GM23248 (cell line): ENCODE measurements at regions of chr1 and their contacts with region 1.

Region 1: GRCh38 chr1:43946236-43947060 is at the start of gene IPO13:
- DNase-seq: peak; percentile 98
- H3K4me3 ChIP-seq: peak within 1 kb of the TSS; percentile 92
- H3K27ac ChIP-seq: peak within 1 kb of the TSS; percentile 76
- H3K4me1 ChIP-seq: peaks cover 15% of the 10 kb centered on the region
- H3K27me3 ChIP-seq: no peaks in the 10 kb centered on the region
- total RNA-seq, gene IPO13: 29.4 and 35.8 TPM in 2 replicates

Region 2: GRCh38 chr1:43227143-43227764 is 719.2 kb before region 1 on chr1:
- in situ Hi-C with region 1: loop called (anchors 25 kb)
- DNase-seq: peak; percentile 68
- H3K4me3 ChIP-seq: no peak overlapping the region
- H3K27ac ChIP-seq: no peak overlapping the region
- H3K4me1 ChIP-seq: peaks cover 7% of the 10 kb centered on the region
- H3K27me3 ChIP-seq: no peaks in the 10 kb centered on the region

Region 3: DNA sequence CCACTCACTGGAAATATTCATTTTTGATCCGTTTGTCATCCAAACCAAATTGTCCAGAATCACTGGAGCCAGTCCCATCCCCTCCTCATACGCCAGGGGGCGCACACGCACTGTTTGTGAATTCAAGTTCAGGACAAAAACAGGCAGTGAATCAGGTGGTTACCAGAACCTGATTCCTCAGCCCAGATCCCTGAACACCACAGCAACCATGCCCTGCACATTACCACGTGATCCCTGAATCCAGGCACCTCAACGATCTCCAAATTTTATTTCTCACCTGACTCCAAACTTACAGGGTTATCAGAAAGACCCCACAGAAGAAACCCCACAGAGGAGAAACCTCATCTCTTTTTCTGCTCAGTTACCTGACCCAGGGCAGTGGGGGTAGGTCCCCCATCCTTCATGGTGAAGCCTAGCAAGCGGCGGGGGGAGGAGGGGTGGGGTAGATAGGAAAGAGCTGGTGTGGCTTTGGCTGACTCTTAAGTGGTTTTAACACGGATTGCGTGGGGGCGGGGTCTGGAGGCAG is 417.2 kb before region 1 on chr1:
- in situ Hi-C with region 1: loop called (anchors 25 kb)
- DNase-seq: peak; percentile 90
- H3K4me3 ChIP-seq: no peak overlapping the region
- H3K27ac ChIP-seq: no peak overlapping the region
- H3K4me1 ChIP-seq: peaks cover 4% of the 10 kb centered on the region; the same call in 1 of the 2 replicates
- H3K27me3 ChIP-seq: no peaks in the 10 kb centered on the region

Region 4: GRCh38 chr1:43634721-43635120 is 311.7 kb before region 1 on chr1:
- in situ Hi-C with region 1: no loop called
- DNase-seq: no peak
- H3K4me3 ChIP-seq: no peak overlapping the region
- H3K27ac ChIP-seq: no peak overlapping the region
- H3K4me1 ChIP-seq: no peaks in the 10 kb centered on the region
- H3K27me3 ChIP-seq: no peaks in the 10 kb centered on the region

Region 5: DNA sequence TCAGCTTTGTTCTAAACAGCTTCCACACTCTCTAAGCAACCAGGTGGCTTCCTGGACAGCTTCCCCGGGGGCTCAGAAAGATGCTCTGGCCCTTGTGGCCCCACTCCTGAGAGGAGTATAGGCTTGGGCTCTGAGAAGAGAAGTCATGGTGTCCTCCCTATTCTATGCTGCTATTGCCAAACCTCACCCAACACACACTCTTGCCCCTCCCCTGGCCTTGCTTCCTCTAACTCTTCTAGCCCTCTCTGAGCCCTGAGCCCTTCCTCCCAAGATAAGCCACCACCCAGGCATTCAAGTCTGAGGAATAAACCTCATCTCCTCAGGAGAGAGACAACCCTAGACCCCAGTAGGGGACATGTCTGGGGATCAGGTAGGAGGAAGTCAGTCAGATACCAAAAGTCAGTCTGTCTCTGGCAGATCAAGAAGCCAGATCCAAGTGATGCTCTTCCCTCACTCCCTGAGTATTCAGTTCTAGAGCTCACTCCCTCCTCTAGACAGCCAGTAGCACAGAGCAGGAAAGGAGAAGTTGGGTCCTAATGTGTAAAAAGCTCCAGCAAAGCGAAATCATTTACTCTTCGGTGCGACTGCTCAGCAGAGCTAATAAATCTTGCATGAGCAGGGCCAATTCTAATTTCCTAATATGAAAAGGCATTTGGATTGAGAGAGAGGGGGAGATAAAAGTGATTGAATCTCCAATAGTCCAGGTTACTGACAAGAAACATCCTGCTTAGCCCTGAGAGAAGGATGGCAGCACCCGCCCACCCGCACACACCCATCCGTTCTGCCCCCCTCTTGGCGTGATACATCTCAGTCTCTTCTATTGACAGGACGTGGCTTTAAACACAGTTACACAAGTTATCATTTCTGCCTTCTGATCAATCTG is 317.4 kb after region 1 on chr1:
- in situ Hi-C with region 1: no loop called
- DNase-seq: no peak
- H3K4me3 ChIP-seq: no peak overlapping the region
- H3K27ac ChIP-seq: no peak overlapping the region
- H3K4me1 ChIP-seq: no peaks in the 10 kb centered on the region
- H3K27me3 ChIP-seq: no peaks in the 10 kb centered on the region